ENCODE measurements at regions of chr17 and their contacts with region 1.

Region 1: DNA sequence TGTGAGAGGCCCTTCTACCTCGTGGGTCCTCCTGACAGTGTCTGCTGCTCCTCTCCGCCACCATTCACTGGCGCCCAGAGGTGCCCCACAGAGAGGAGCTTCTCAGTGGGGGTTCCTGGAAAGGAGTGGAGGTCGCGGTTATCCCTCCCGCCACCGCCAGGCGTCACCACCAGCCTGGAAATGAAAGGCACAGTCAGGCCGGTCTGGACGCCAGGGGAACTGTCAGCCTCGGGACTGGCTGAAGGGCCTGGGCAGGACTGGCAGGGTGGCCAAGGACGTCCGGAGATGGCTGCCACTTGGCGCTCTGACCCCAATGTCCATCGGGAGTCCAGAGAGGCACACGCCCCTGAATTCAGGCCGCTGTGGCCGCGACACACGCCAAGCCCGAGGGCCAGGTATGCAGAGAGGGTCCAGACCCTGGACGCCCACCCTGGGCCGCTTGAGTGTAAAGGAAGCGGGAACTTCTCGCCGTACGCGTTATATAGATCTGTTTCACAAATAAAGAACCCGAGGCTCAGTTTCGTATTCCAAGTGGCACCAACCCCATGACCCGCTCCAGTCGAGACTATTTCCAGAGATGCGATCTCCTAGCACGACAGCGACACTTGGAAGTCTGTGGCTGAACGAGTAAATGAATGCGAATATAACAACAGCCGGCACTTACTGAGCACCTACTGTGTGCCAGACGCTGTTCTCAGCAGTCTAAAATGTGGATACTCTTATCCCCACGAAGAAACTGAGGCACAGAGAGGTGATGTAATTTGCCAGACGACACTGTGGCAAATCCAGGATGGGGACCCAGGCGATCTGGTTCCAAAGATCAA is 7.6 kb upstream of the NXPH3 start:
- DNase-seq: peak; percentile 94
- ATAC-seq: peak; percentile 76

Region 2: GRCh38 chr17:49422714-49423113 is 145.4 kb before region 1 on chr17:
- intact Hi-C with region 1: no loop called
- DNase-seq: no peak
- ATAC-seq: no peak

Region 3: GRCh38 chr17:49694847-49695683 is 127.0 kb after region 1 on chr17:
- intact Hi-C with region 1: loop called (anchors 2 kb)
- DNase-seq: peak; percentile 74
- ATAC-seq: peak; percentile 21

Measured in Right ventricle myocardium superior (tissue), 1 donor.